Prostate gland (tissue), 2 donors: ENCODE measurements at regions of chr3 and their contacts with region 1.

Region 1: GRCh38 chr3:73624821-73625665 is at the start of gene PDZRN3:
- DNase-seq: peak; percentile 79
- H3K4me3 ChIP-seq: peak within 1 kb of the TSS; percentile 78 to 81
- H3K27ac ChIP-seq: peak within 1 kb of the TSS; percentile 88 to 92
- H3K4me1 ChIP-seq: no peaks in the 10 kb centered on the region
- H3K27me3 ChIP-seq: no peaks in the 10 kb centered on the region
- CTCF ChIP-seq: peak in 1 of 4 experiments; percentile 26
- POLR2A ChIP-seq: peak; percentile 68
- total RNA-seq, gene PDZRN3: 80.9 to 143 TPM

Region 2: DNA sequence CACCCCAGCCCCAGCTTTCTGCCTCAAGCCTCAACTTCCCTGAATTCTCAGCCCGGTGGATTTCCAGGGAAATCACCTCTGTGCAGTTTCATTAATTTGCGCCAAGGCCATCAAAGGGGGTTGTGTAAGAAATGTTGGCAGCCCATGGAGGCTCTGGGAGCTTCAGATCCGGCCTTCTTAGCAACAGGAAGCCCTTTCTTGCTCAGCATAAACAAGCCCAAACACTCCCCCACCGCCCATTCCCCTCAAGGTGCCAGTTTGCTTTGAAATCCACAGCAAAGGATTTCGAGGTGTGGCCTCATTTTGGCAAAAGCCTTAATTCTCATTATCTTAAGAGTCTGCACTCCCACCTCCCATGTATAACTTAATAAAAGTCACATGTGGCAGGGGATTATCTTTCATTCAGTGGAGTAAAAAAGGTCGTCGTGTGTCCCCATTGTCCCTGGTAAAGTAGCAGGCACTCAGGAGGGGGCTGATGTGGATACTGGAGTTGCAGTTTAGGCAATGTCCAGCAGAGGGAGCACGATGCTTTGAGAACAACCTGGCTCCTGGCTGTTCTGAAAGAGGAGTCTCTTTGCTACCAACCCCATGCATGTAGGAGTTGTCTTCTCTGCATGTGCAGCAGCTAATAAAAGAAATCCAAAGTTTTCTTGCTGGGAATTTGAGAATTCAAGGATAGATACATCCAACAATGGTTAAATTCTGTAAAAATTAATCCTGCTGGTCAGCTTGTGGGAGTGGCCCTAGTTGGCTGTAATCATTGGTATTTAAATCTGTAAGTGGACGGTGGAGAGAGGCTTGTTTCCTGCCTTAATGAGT is 524.1 kb before region 1 on chr3:
- intact Hi-C with region 1: loop called (anchors 10 kb)
- DNase-seq: peak; percentile 89
- H3K4me3 ChIP-seq: no peak overlapping the region
- H3K27ac ChIP-seq: no peak overlapping the region
- H3K4me1 ChIP-seq: no peaks in the 10 kb centered on the region
- H3K27me3 ChIP-seq: no peaks in the 10 kb centered on the region
- CTCF ChIP-seq: peak; percentile 91 to 95 (median 93)
- POLR2A ChIP-seq: no peak

Region 3: DNA sequence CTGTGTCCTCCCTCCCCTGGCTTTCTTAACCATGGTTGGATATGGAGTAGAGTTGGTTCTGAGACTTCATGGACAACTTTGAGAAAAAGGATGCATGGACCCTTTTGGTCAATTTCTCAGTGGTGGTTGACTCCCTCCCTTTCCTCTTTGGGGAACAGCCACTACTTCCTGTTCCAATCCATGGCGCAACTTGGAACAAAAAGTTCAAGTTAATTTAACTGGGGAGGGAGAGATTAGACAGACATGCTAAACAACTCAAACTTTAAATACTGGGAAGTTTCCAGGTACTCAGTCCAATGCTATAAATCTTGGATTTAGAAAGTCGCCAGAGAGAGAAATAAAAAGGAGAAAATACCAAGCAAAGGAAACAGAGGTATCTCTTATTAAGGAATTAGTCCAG is 202.5 kb before region 1 on chr3:
- intact Hi-C with region 1: loop called (anchors 10 kb)
- DNase-seq: no peak
- H3K4me3 ChIP-seq: no peak overlapping the region
- H3K27ac ChIP-seq: peak overlapping the region; percentile 26 to 46
- H3K4me1 ChIP-seq: peaks cover 6% of the 10 kb centered on the region
- H3K27me3 ChIP-seq: no peaks in the 10 kb centered on the region
- CTCF ChIP-seq: no peak
- POLR2A ChIP-seq: no peak

Region 4: GRCh38 chr3:73520865-73521461 is 104.1 kb before region 1 on chr3:
- intact Hi-C with region 1: loop called (anchors 5 kb)
- DNase-seq: peak; percentile 92
- H3K4me3 ChIP-seq: peak overlapping the region; percentile 18 to 22
- H3K27ac ChIP-seq: peak overlapping the region; percentile 81 to 90
- H3K4me1 ChIP-seq: peaks cover 34% of the 10 kb centered on the region
- H3K27me3 ChIP-seq: no peaks in the 10 kb centered on the region
- CTCF ChIP-seq: peak in 1 of 4 experiments; percentile 7
- POLR2A ChIP-seq: no peak

Region 5: GRCh38 chr3:73719861-73720260 is 94.8 kb after region 1 on chr3:
- intact Hi-C with region 1: loop called (anchors 5 kb)
- DNase-seq: peak; percentile 33
- H3K4me3 ChIP-seq: no peak overlapping the region
- H3K27ac ChIP-seq: peak overlapping the region; percentile 83 to 84
- H3K4me1 ChIP-seq: peaks cover 13% of the 10 kb centered on the region
- H3K27me3 ChIP-seq: no peaks in the 10 kb centered on the region
- CTCF ChIP-seq: no peak
- POLR2A ChIP-seq: no peak

Region 6: GRCh38 chr3:73762855-73763254 is 137.8 kb after region 1 on chr3:
- intact Hi-C with region 1: loop called (anchors 5 kb)
- DNase-seq: no peak
- H3K4me3 ChIP-seq: no peak overlapping the region
- H3K27ac ChIP-seq: no peak overlapping the region
- H3K4me1 ChIP-seq: no peaks in the 10 kb centered on the region
- H3K27me3 ChIP-seq: no peaks in the 10 kb centered on the region
- CTCF ChIP-seq: no peak
- POLR2A ChIP-seq: no peak

Region 7: DNA sequence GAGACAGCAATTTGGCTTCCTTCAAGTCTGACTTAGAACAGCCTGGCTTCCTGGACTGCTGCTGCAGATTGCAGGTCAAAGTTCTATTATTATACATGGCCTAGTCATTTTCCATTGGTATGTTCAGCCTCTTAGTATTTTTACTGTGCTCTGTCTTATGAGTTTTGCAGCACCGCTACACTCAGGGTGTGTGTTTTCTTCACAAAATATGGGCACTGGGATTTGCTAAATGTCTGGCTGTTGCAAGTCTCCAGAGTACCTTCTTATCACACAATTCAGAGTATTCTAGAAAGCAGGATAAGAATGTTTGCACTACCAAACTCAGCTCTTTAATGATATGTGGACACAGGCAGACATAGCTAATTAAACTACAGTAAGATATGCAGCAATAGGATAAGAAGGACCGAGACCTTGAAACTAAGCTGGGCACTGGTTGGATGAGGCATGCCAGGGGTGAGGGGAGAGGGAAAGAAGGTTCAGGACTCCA is 202.7 kb after region 1 on chr3:
- intact Hi-C with region 1: no loop called
- DNase-seq: no peak
- H3K4me3 ChIP-seq: no peak overlapping the region
- H3K27ac ChIP-seq: peak overlapping the region in 1 of 2 donors; percentile 12
- H3K4me1 ChIP-seq: peaks cover 5% of the 10 kb centered on the region
- H3K27me3 ChIP-seq: no peaks in the 10 kb centered on the region
- CTCF ChIP-seq: no peak
- POLR2A ChIP-seq: no peak

Region 8: GRCh38 chr3:73848173-73848906 is 223.3 kb after region 1 on chr3:
- intact Hi-C with region 1: loop called (anchors 5 kb)
- DNase-seq: no peak
- H3K4me3 ChIP-seq: no peak overlapping the region
- H3K27ac ChIP-seq: no peak overlapping the region
- H3K4me1 ChIP-seq: no peaks in the 10 kb centered on the region
- H3K27me3 ChIP-seq: no peaks in the 10 kb centered on the region
- CTCF ChIP-seq: peak; percentile 43 to 77 (median 64)
- POLR2A ChIP-seq: no peak

Region 9: GRCh38 chr3:74080056-74080461 is 455.0 kb after region 1 on chr3:
- intact Hi-C with region 1: no loop called
- DNase-seq: no peak
- H3K4me3 ChIP-seq: no peak overlapping the region
- H3K27ac ChIP-seq: no peak overlapping the region
- H3K4me1 ChIP-seq: no peaks in the 10 kb centered on the region
- H3K27me3 ChIP-seq: no peaks in the 10 kb centered on the region
- CTCF ChIP-seq: no peak
- POLR2A ChIP-seq: no peak